HepG2 (cell line): ENCODE measurements at regions of chr17 and their contacts with region 1.

Region 1: DNA sequence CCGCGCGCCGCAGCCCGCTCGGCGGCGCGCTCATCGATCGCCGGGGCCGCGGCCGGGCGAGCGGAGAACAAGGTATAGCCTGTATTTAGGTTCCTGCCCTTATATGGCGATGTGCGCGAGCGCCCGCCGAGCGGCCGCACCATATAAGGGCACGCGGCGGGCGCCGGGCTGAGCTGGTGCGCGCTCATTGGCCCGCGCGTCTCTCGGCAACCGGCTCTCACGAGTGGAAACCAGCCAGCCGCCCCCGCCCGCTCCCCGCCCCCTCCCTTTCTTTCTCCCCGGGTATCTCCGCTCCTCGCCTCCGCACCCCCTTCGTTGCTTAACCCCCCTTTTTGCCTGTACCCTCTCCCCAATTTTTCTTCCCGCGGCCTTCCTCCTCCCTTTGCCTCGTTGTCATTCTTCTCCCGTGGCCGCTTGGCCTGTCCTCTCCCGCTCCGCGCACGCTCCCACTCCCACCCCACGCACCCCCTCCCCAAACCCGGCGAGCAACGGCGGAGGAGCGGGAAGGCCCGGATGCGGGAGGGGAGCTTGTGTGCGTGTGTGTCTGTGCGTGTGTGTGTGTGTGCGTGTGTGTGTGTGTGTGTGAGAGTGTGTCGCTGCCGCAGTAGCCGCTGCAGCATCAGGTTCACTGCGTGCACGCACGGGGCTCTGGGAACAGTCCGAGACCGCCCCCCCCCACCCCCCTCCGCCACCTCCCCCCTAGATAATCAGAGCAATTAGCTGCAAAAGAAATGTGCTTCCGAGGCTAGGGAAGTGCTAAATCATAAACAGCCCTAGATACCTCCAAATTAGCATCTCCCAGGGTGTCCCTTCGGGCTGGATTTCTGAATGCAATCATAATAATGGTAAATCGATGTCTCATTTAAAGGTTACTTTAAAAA is 13.5 kb upstream of the CBX8 start:
- DNase-seq: peak; percentile 83
- ATAC-seq: peak; percentile 77
- H3K4me3 ChIP-seq: peak overlapping the region in 2 of 3 experiments; percentile 38 to 62; a peak in 3 of 6 replicates
- H3K27ac ChIP-seq: no peak overlapping the region
- H3K4me1 ChIP-seq: peaks cover 49% of the 10 kb centered on the region
- H3K27me3 ChIP-seq: peaks cover 25 to 68% of the 10 kb centered on the region in 2 experiments
- CTCF ChIP-seq: no peak
- EP300 ChIP-seq: no peak
- POLR2A ChIP-seq: no peak
- RAD21 ChIP-seq: peak; percentile 27; the same call in 1 of the 2 replicates

Region 2: GRCh38 chr17:79741751-79742588 is 68.4 kb before region 1 on chr17:
- CTCF ChIA-PET with region 1: no interaction called
- POLR2A ChIA-PET with region 1: interaction called, 13 read pairs
- in situ Hi-C with region 1: no loop called
- intact Hi-C with region 1: no loop called
- DNase-seq: peak; percentile 67
- ATAC-seq: peak; percentile 53
- H3K4me3 ChIP-seq: peak overlapping the region; percentile 53 to 75 (median 56)
- H3K27ac ChIP-seq: peak overlapping the region; percentile 38
- H3K4me1 ChIP-seq: peaks cover 93% of the 10 kb centered on the region
- H3K27me3 ChIP-seq: peaks cover 7 to 11% of the 10 kb centered on the region in 2 experiments; a peak in 4 of 5 replicates
- CTCF ChIP-seq: peak; percentile 98
- EP300 ChIP-seq: peak in 1 of 2 experiments; percentile 30; a peak in 1 of 4 replicates
- POLR2A ChIP-seq: no peak
- RAD21 ChIP-seq: peak; percentile 86

Region 3: DNA sequence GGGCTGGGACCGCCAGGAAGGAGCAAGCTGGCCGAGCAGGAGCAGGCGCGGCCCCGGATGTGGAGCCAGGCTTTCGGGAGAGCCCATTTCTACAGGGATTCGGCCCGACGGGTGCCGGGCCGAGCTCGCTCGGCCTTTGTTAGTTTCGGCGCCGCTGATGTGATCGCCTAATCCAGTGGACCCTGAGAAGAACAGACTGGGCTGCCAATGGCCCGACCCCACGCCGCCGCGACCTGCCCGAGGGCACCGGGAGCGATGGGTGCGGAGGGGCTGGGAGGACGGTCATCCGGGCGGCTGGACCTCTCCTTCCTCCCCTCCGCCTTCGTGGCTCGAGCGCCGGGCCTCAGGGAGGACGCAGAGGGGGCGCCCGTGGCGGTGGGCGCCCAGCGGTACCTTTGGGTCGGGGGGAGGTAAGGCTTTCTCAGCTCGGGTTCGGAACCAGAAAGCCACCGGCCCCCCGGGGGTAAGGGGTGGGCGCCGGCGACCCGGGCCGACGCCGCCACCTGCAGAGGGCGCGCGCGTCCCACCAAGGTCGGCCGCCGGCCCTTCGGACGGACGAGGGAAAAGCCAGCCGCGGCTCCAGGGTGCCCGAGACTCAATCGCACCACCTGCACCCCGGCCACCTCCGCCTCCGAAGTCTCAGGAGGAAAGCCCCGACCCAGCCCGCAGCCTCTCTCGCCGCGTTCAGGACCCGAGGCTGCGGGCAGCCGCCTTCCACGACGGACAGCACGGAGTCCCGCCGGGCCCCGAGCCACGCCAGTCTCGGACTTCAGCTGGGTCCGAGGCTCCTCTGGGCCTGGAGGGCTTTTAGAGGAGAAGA is 20.6 kb before region 1 on chr17:
- CTCF ChIA-PET with region 1: interaction called, 14 read pairs
- POLR2A ChIA-PET with region 1: no interaction called
- in situ Hi-C with region 1: no loop called
- intact Hi-C with region 1: no loop called
- DNase-seq: no peak
- ATAC-seq: peak; percentile 76
- H3K4me3 ChIP-seq: peak overlapping the region; percentile 22 to 67 (median 48); a peak in 4 of 6 replicates
- H3K27ac ChIP-seq: no peak overlapping the region
- H3K4me1 ChIP-seq: peaks cover 46% of the 10 kb centered on the region
- H3K27me3 ChIP-seq: peaks cover 18 to 48% of the 10 kb centered on the region in 2 experiments
- CTCF ChIP-seq: peak; percentile 83
- EP300 ChIP-seq: no peak
- POLR2A ChIP-seq: no peak
- RAD21 ChIP-seq: peak; percentile 98

Region 4: DNA sequence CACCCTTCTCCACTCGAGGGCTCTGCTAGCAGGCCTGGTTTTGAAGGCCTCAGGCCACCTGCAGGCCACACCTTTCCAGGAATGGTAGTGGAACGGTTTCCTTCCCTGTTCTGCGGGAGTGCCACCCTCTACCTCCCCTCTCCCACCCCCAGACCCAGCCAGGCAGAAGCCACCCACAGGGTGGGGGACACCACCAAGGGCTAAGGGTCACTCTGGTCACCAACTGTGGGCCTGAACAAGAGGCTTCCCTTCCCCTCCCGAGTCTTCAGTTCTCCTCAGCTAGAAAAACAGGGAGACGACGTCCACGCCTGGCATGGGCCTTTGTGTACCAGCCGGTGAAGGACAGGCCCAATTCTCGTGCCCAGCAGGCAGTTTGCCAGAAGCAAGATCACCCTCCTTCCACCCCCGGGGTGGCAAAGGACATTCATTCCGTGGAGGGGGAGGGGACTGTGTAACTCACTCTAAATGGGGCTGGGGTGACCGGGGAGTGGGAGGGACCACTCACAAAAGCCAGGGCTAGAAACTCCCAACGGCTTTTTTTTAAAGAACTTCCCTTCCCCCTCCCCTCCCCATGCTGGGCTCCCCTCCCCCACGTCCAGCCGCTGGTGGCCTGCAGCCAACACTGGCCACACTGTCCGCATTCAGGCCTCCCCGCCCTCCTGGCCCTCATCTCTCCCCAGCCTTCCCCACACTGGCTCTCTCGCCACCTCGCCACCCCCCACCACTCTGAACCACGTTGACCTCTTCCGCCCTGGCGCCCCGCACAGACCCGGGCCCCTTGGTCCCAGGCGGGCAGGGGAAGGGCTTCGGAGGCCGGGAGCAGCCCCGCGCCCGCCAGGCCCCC is 21.2 kb after region 1 on chr17:
- CTCF ChIA-PET with region 1: interaction called, 12 read pairs
- POLR2A ChIA-PET with region 1: interaction called, 274 read pairs
- in situ Hi-C with region 1: no loop called
- intact Hi-C with region 1: loop called (anchors 1 kb)
- DNase-seq: peak; percentile 73
- ATAC-seq: peak; percentile 63
- H3K4me3 ChIP-seq: peak overlapping the region; percentile 62 to 79 (median 73)
- H3K27ac ChIP-seq: peak overlapping the region; percentile 82
- H3K4me1 ChIP-seq: peaks cover 87% of the 10 kb centered on the region
- H3K27me3 ChIP-seq: no peaks in the 10 kb centered on the region; a peak in 2 of 5 replicates
- CTCF ChIP-seq: peak; percentile 28; the same call in 1 of the 2 replicates
- EP300 ChIP-seq: peak in 1 of 2 experiments; percentile 58; a peak in 2 of 4 replicates
- POLR2A ChIP-seq: 0 out of 4 replicates have a peak, but pooled peaks of 1 of the 2 experiments have one; percentile 11
- RAD21 ChIP-seq: no peak

Region 5: DNA sequence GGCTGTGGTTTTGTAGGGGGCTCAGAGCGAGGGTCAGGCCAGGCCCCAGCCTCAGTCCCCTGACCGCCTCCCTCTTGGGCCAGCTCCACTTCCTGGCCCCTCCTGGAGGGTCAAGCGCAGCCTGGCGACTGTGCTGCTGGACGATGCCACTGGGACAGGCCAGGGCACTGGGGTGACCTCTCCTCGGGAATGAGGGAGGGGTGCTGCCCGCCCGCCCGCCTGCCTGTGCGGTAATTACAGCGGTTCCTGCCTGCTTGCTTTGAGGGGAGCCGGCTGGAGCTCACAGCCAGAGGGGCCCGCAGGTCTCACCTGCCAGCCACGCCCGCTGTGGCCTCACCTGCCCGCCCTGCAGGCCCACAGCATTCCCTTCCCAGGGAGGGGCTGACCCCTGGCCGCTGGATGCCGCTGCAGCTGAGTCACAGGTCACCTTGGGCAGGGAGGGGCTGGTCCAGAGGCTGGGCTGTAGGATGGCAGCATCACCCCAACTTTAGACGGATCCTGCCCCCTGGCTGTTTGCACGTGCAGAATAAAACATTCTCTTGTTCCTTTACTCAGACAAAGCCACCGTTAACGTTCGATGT is 105.6 kb after region 1 on chr17:
- CTCF ChIA-PET with region 1: interaction called, 3 read pairs
- POLR2A ChIA-PET with region 1: no interaction called
- in situ Hi-C with region 1: loop called (anchors 5 kb)
- intact Hi-C with region 1: no loop called
- DNase-seq: peak; percentile 75
- ATAC-seq: peak; percentile 31
- H3K4me3 ChIP-seq: peak overlapping the region in 1 of 3 experiments; percentile 9; a peak in 1 of 6 replicates
- H3K27ac ChIP-seq: no peak overlapping the region
- H3K4me1 ChIP-seq: peaks cover 82% of the 10 kb centered on the region
- H3K27me3 ChIP-seq: peaks cover 3 to 85% of the 10 kb centered on the region in 2 experiments; a peak in 4 of 5 replicates
- CTCF ChIP-seq: peak; percentile 77
- EP300 ChIP-seq: no peak
- POLR2A ChIP-seq: no peak
- RAD21 ChIP-seq: peak; percentile 74